Endothelial cell of umbilical vein (primary cell): ENCODE measurements at regions of chr1 and their contacts with region 1.

Region 1: DNA sequence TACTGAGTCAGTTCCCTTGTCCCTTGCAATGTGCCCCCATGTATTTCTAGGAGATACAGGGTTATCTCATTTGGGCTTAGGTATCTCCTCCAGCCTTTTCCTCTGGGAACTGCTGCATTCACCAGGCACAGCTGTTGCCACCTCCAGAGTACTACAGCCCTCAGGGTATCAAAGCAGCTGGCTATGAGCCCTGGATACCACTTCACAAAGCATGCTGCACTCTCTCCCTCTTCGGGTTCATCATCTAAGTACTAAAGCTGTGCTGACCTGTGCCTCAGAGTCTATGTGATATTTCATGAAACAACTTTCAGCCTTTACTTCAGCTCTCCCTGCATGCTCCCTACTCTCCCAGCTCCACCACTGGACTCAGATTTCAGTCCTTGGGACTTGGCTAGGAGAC is 62.3 kb downstream of the CCDC185 start:
- DNase-seq: no peak
- H3K4me3 ChIP-seq: no peak overlapping the region
- H3K27ac ChIP-seq: no peak overlapping the region
- H3K4me1 ChIP-seq: no peaks in the 10 kb centered on the region
- H3K27me3 ChIP-seq: no peaks in the 10 kb centered on the region
- CTCF ChIP-seq: no peak
- POLR2A ChIP-seq: no peak

Region 2: GRCh38 chr1:223478666-223479065 is 23.2 kb after region 1 on chr1:
- CTCF ChIA-PET with region 1: no interaction called
- POLR2A ChIA-PET with region 1: no interaction called
- dilution Hi-C with region 1: no loop called
- intact Hi-C with region 1: loop called (anchors 1 kb)
- DNase-seq: no peak
- H3K4me3 ChIP-seq: no peak overlapping the region
- H3K27ac ChIP-seq: no peak overlapping the region
- H3K4me1 ChIP-seq: no peaks in the 10 kb centered on the region
- H3K27me3 ChIP-seq: no peaks in the 10 kb centered on the region
- CTCF ChIP-seq: no peak
- POLR2A ChIP-seq: no peak

Region 3: DNA sequence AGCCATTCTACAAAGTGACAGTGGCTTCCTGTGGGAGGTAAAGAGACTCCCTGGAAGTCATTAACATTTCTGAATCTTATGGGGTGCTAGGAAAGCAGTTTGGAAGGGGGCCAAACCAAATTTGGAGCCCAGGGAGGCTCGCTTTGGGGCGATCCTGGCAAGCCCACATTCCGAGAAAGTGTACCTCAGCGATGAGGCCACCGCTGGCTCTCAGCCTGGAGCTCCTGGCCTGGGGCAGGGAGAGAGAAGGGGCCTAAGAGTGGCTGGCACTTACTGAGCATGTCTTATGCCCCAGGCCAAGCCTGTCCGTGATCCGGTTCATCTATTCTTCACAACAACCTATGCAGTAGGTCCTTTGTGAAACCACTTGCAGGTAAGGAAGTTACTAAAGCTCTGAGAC is 36.6 kb after region 1 on chr1:
- CTCF ChIA-PET with region 1: no interaction called
- POLR2A ChIA-PET with region 1: no interaction called
- dilution Hi-C with region 1: no loop called
- intact Hi-C with region 1: no loop called
- DNase-seq: no peak
- H3K4me3 ChIP-seq: no peak overlapping the region
- H3K27ac ChIP-seq: no peak overlapping the region
- H3K4me1 ChIP-seq: no peaks in the 10 kb centered on the region
- H3K27me3 ChIP-seq: no peaks in the 10 kb centered on the region
- CTCF ChIP-seq: no peak
- POLR2A ChIP-seq: no peak